Psoas muscle (tissue), 8 donors: ENCODE measurements at regions of chr7 and their contacts with region 1.

Region 1: DNA sequence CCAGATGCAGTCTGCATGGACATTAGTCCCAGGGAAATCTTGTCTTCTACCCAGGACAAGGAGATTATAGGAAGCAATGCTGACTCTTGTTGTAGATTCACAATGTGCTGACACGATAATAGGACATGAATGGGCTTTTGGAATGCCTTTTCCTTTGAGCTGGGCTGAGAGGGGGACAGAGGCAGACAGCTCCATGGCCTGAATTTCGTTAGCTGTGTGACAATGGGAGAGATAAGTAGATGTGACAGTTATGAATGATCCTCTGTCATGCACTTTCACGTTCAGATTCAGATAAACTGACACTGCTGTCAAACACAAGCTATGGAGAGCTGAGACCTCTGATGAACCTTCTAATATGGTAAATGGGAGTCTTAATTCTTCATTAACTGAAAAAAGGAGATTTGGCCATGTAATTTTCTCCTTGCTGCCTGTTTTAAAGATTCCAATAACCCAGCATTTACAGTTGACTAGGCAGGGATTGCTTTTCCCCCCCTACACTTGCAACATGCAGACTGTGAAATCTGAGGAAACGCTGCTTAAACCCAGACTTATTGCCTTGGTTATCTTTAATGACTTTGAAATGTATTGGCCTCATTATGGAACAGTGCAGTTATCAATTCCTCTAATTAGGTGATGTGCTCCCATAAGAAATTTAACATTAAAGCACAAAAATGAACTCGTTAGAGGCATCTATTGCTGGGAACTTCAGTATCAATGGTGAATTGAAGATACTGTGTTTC is 669.3 kb downstream of the AUTS2 start:
- DNase-seq: no peak
- ATAC-seq: no peak
- H3K4me3 ChIP-seq: no peak overlapping the region
- H3K27ac ChIP-seq: no peak overlapping the region
- H3K4me1 ChIP-seq: no peaks in the 10 kb centered on the region
- H3K27me3 ChIP-seq: no peaks in the 10 kb centered on the region
- CTCF ChIP-seq: no peak

Region 2: GRCh38 chr7:70392256-70392876 is 124.8 kb after region 1 on chr7:
- intact Hi-C with region 1: loop called in 1 of 2 experiments (anchors 10 kb)
- DNase-seq: no peak
- ATAC-seq: peak in 1 of 4 donors; percentile 46
- H3K4me3 ChIP-seq: no peak overlapping the region
- H3K27ac ChIP-seq: no peak overlapping the region
- H3K4me1 ChIP-seq: no peaks in the 10 kb centered on the region
- H3K27me3 ChIP-seq: no peaks in the 10 kb centered on the region
- CTCF ChIP-seq: no peak